CD14-positive monocyte (primary cell): ENCODE measurements at regions of chr6 and their contacts with region 1.

Region 1: GRCh38 chr6:34392497-34393190 is at the start of gene NUDT3:
- DNase-seq: peak; percentile 95 to 98 (median 97)
- H3K4me3 ChIP-seq: peak within 1 kb of the TSS; percentile 77 to 93 (median 87)
- H3K4me3 Mint-ChIP-seq: peak within 1 kb of the TSS; percentile 69 to 94
- H3K27ac ChIP-seq: peak within 1 kb of the TSS; percentile 84 to 95
- H3K27ac Mint-ChIP-seq: peak within 1 kb of the TSS in 6 of 7 donors; percentile 89 to 95 (median 92)
- H3K4me1 ChIP-seq: peaks cover 30 to 42% of the 10 kb centered on the region in 2 donors
- H3K4me1 Mint-ChIP-seq: peaks cover 23% of the 10 kb centered on the region
- H3K27me3 ChIP-seq: no peaks in the 10 kb centered on the region
- H3K27me3 Mint-ChIP-seq: peaks cover 0 to 4% (median 0%) of the 10 kb centered on the region in 3 donors
- CTCF ChIP-seq: peak; percentile 87
- polyA plus RNA-seq, gene NUDT3: 9.3 to 33.3 (median 10.9) TPM

Region 2: GRCh38 chr6:34176261-34177031 is 216.2 kb before region 1 on chr6:
- intact Hi-C with region 1: no loop called
- DNase-seq: no peak
- H3K4me3 ChIP-seq: no peak overlapping the region
- H3K4me3 Mint-ChIP-seq: no peak overlapping the region
- H3K27ac ChIP-seq: no peak overlapping the region
- H3K27ac Mint-ChIP-seq: peak overlapping the region in 1 of 7 donors; percentile 3
- H3K4me1 ChIP-seq: no peaks in the 10 kb centered on the region
- H3K4me1 Mint-ChIP-seq: peaks cover 4% of the 10 kb centered on the region
- H3K27me3 ChIP-seq: no peaks in the 10 kb centered on the region
- H3K27me3 Mint-ChIP-seq: peaks cover 0 to 5% (median 2%) of the 10 kb centered on the region in 3 donors
- CTCF ChIP-seq: no peak

Region 3: GRCh38 chr6:34332251-34333198 is 60.1 kb before region 1 on chr6:
- intact Hi-C with region 1: loop called in 1 of 2 experiments (anchors 5 kb)
- DNase-seq: peak; percentile 48 to 68 (median 60)
- H3K4me3 ChIP-seq: peak overlapping the region in 1 of 3 experiments; percentile 24
- H3K4me3 Mint-ChIP-seq: peak overlapping the region; percentile 28 to 75
- H3K27ac ChIP-seq: peak overlapping the region; percentile 29 to 67
- H3K27ac Mint-ChIP-seq: peak overlapping the region; percentile 74 to 92 (median 90)
- H3K4me1 ChIP-seq: peaks cover 28 to 31% of the 10 kb centered on the region in 2 donors
- H3K4me1 Mint-ChIP-seq: peaks cover 37% of the 10 kb centered on the region
- H3K27me3 ChIP-seq: no peaks in the 10 kb centered on the region
- H3K27me3 Mint-ChIP-seq: no peaks in the 10 kb centered on the region
- CTCF ChIP-seq: no peak

Region 4: GRCh38 chr6:34377984-34378383 is 14.7 kb before region 1 on chr6:
- intact Hi-C with region 1: loop called in 1 of 2 experiments (anchors 2 kb)
- DNase-seq: no peak
- H3K4me3 ChIP-seq: no peak overlapping the region
- H3K4me3 Mint-ChIP-seq: no peak overlapping the region
- H3K27ac ChIP-seq: no peak overlapping the region
- H3K27ac Mint-ChIP-seq: peak overlapping the region in 3 of 7 donors; percentile 43 to 58 (median 44)
- H3K4me1 ChIP-seq: peaks cover 27% of the 10 kb centered on the region in 2 donors
- H3K4me1 Mint-ChIP-seq: peaks cover 20% of the 10 kb centered on the region
- H3K27me3 ChIP-seq: no peaks in the 10 kb centered on the region
- H3K27me3 Mint-ChIP-seq: no peaks in the 10 kb centered on the region
- CTCF ChIP-seq: no peak